Endothelial cell of umbilical vein (primary cell): ENCODE measurements at regions of chr6 and their contacts with region 1.

Region 1: DNA sequence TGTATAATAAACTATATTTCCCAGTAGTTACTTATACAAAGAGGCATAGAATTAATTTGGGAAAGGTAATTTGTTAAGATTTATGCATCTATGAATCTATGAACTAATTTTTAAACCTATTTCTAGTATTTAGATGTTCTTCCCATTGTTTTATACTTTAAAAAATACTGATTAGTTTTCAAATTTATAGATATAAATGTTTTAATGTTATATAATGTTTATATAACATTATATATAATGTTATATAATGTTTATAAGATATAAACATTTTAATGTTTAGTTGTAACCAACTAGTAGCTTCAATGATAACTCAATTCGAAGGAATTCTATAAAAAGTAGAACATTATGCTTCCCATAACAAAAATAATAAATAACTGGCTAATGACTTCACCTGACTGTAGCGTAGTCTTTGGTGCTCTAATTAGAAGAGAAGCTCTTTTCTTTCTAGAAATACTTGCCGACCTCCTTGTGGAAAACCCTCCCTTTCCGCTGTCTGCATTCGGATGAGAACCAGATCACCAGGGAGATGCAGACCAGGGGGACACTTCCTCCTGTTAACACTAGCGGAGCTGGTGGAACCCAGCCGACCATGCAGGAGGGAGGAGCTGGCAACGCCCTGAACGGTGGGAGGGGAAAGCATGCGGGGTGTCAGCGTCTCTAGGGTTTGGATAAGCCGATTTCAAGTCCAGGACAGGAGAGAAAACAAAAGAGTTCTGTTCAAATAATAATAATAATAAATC is 158.4 kb downstream of the OR2B2 start:
- DNase-seq: peak; percentile 37
- H3K4me3 ChIP-seq: peak overlapping the region; percentile 31 to 61 (median 38)
- H3K27ac ChIP-seq: no peak overlapping the region
- H3K4me1 ChIP-seq: peaks cover 5% of the 10 kb centered on the region
- H3K27me3 ChIP-seq: peaks cover 35 to 36% of the 10 kb centered on the region in 2 experiments
- CTCF ChIP-seq: no peak
- POLR2A ChIP-seq: no peak

Region 2: DNA sequence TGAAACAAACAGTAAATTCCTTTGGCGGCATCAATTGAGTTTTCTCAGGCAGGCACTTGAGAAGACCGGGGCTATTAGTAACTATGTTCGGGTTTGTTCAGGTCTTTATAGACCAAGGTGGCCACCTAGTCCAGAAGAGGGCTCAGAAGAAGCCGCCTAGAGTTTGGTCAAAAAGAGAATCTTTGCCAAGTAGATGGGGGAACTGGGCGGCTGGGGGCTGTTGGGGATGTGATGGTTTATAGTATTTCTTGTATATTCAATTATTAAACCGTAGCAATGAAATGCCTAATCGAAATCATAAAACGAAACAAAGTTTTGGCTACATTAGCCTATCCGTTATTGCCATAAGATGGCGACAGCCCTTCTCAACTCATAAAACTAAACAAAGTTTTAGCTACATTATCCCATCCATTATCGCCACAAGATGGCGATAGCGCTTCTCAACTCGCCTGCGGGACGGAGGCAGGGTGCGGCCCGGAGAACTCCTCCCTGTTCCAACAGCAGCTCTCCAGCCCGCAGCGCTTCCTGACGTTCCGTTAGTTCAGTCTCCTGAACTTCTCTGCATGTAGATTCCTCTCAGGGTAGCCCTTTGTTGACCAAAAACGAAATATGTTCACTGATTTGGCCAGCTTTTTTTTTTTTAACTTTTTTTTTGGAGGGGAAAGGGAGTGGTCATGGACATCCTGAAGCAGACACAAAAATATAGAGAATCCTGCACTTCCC is 626.9 kb before region 1 on chr6:
- CTCF ChIA-PET with region 1: interaction called, 13 read pairs
- POLR2A ChIA-PET with region 1: no interaction called
- dilution Hi-C with region 1: no loop called
- intact Hi-C with region 1: loop called (anchors 1 kb)
- DNase-seq: peak; percentile 92
- H3K4me3 ChIP-seq: peak overlapping the region in 2 of 3 experiments; percentile 24 to 28
- H3K27ac ChIP-seq: no peak overlapping the region
- H3K4me1 ChIP-seq: peaks cover 10% of the 10 kb centered on the region
- H3K27me3 ChIP-seq: no peaks in the 10 kb centered on the region
- CTCF ChIP-seq: peak; percentile 71 to 73
- POLR2A ChIP-seq: peak; percentile 46

Region 3: GRCh38 chr6:27237089-27237803 is 516.6 kb before region 1 on chr6:
- CTCF ChIA-PET with region 1: interaction called, 10 read pairs
- POLR2A ChIA-PET with region 1: no interaction called
- dilution Hi-C with region 1: no loop called
- intact Hi-C with region 1: no loop called
- DNase-seq: peak; percentile 30
- H3K4me3 ChIP-seq: peak overlapping the region in 2 of 3 experiments; percentile 61 to 65
- H3K27ac ChIP-seq: no peak overlapping the region
- H3K4me1 ChIP-seq: peaks cover 12% of the 10 kb centered on the region
- H3K27me3 ChIP-seq: peaks cover 0 to 3% of the 10 kb centered on the region in 2 experiments
- CTCF ChIP-seq: no peak
- POLR2A ChIP-seq: no peak

Region 4: DNA sequence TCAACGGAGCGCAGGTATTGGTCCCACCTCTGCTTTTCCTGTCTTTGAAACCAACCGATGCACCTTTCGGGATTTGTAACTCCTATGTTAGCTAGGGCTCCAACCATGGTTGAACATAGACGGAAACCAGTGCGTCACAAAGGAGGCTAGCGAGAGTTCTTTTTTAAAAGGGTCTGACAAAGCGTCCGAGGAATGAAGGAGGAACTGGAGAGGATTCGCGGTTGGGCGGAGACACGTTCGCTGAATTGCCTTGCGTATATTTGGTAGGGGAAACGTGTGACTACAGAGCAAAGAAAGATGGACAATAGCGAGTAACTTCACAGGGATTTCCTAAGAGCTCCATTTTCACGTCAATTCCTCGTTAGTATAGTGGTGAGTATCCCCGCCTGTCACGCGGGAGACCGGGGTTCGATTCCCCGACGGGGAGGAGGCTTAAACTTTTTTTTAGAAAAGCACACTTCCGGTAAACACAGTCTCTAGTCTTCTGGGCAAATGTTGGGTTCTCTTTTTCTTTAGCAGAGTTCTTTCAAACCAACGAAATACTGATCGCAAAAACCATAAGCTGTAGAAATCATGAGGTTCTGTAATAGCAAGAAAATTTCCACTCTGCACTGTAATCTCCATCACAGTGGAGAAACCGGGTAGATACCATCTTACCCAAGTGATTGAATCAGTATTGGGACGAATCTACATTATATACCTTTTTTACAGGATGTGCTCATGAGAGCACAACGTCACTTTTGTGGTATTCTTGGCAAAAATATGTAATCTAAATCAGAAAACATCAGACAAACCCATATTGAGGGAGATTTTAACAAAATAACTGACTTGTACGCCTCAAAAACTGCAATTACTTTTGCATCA is 274.3 kb before region 1 on chr6:
- CTCF ChIA-PET with region 1: interaction called, 13 read pairs
- POLR2A ChIA-PET with region 1: no interaction called
- dilution Hi-C with region 1: no loop called
- intact Hi-C with region 1: loop called (anchors 1 kb)
- DNase-seq: peak; percentile 94
- H3K4me3 ChIP-seq: peak overlapping the region; percentile 78 to 93 (median 88)
- H3K27ac ChIP-seq: peak overlapping the region; percentile 82
- H3K4me1 ChIP-seq: peaks cover 7% of the 10 kb centered on the region
- H3K27me3 ChIP-seq: peaks cover 11 to 16% of the 10 kb centered on the region in 2 experiments
- CTCF ChIP-seq: no peak
- POLR2A ChIP-seq: no peak

Region 5: GRCh38 chr6:27608916-27609883 is 144.6 kb before region 1 on chr6:
- CTCF ChIA-PET with region 1: interaction called, 10 read pairs
- POLR2A ChIA-PET with region 1: no interaction called
- dilution Hi-C with region 1: no loop called
- intact Hi-C with region 1: no loop called
- DNase-seq: peak; percentile 63
- H3K4me3 ChIP-seq: no peak overlapping the region
- H3K27ac ChIP-seq: no peak overlapping the region
- H3K4me1 ChIP-seq: no peaks in the 10 kb centered on the region
- H3K27me3 ChIP-seq: no peaks in the 10 kb centered on the region
- CTCF ChIP-seq: peak; percentile 74 to 79
- POLR2A ChIP-seq: no peak

Region 6: GRCh38 chr6:27772261-27773001 is 18.6 kb after region 1 on chr6:
- CTCF ChIA-PET with region 1: interaction called, 58 read pairs
- POLR2A ChIA-PET with region 1: no interaction called
- dilution Hi-C with region 1: no loop called
- intact Hi-C with region 1: no loop called
- DNase-seq: peak; percentile 77
- H3K4me3 ChIP-seq: no peak overlapping the region
- H3K27ac ChIP-seq: no peak overlapping the region
- H3K4me1 ChIP-seq: peaks cover 2% of the 10 kb centered on the region
- H3K27me3 ChIP-seq: peaks cover 16 to 20% of the 10 kb centered on the region in 2 experiments
- CTCF ChIP-seq: peak; percentile 92 to 99
- POLR2A ChIP-seq: no peak

Region 7: GRCh38 chr6:27908017-27908416 is 154.2 kb after region 1 on chr6:
- CTCF ChIA-PET with region 1: no interaction called
- POLR2A ChIA-PET with region 1: no interaction called
- dilution Hi-C with region 1: no loop called
- intact Hi-C with region 1: no loop called
- DNase-seq: no peak
- H3K4me3 ChIP-seq: no peak overlapping the region
- H3K27ac ChIP-seq: no peak overlapping the region
- H3K4me1 ChIP-seq: no peaks in the 10 kb centered on the region
- H3K27me3 ChIP-seq: peaks cover 4 to 11% of the 10 kb centered on the region in 2 experiments
- CTCF ChIP-seq: no peak
- POLR2A ChIP-seq: no peak

Region 8: GRCh38 chr6:28315628-28316027 is 561.8 kb after region 1 on chr6:
- CTCF ChIA-PET with region 1: no interaction called
- POLR2A ChIA-PET with region 1: no interaction called
- dilution Hi-C with region 1: no loop called
- intact Hi-C with region 1: no loop called
- DNase-seq: no peak
- H3K4me3 ChIP-seq: no peak overlapping the region
- H3K27ac ChIP-seq: no peak overlapping the region
- H3K4me1 ChIP-seq: no peaks in the 10 kb centered on the region
- H3K27me3 ChIP-seq: no peaks in the 10 kb centered on the region
- CTCF ChIP-seq: no peak
- POLR2A ChIP-seq: no peak